Pancreas (tissue), 10 donors: ENCODE measurements at regions of chrX and their contacts with region 1.

Region 1: DNA sequence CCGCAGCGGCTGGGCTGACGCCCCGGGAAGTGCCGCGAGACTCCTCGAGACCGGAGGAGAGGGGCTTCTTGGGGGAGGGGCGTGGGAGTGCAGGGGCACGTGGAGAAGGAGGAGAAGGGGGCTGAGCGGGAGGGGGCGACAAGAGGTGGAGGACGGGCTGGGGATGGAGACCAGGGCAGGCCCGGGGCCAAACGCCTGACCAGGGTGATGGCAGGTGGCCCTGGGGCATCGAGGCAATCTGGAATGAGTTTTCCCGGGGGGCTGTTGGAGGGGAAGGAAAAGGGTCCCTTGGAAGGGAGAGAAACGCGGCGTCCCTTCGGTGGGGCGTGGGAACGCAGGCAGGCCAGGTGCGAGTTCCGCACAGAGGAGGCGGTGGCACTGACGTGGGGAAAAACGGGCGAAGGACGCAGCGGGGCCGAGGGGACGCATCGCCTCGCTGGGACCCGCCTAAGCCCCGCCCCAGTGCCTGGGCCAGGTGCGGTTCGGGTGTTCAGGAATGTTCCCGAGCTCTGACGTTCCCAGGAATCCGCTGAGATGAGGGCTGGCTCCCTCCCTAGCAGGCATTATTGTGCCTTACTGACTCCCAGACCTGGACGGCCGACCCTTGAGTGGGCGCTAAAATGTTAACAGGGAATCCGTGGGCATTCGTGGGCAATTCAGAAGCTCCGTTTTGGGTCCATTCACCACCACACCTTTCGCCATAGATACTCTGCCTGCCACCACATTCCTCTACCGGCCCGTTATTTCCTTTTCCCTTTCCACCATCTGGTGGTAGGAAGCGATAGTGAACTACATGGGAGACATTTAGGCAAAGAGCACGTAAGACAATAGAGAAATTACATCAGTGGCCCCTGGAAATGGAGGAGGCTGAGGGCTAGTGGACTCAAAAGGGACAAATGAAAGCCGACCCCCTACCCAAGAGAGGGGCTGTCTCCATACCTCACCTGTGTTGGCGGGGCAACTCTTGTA is 795 bp upstream of the SH3KBP1 start:
- DNase-seq: peak; percentile 23 to 79 (median 56)
- ATAC-seq: peak; percentile 55 to 87 (median 77)
- H3K4me3 ChIP-seq: peak overlapping the region; percentile 18 to 71 (median 40)
- H3K27ac ChIP-seq: peak overlapping the region in 3 of 4 donors; percentile 19 to 44 (median 34)
- H3K4me1 ChIP-seq: no peaks in the 10 kb centered on the region
- H3K27me3 ChIP-seq: no peaks in the 10 kb centered on the region
- CTCF ChIP-seq: peak in 1 of 4 donors; percentile 27

Region 2: GRCh38 chrX:19593690-19594089 is 294.5 kb before region 1 on chrX:
- intact Hi-C with region 1: loop called in 1 of 3 experiments (anchors 10 kb)
- DNase-seq: no peak
- ATAC-seq: peak in 3 of 4 donors; percentile 33 to 46 (median 34)
- H3K4me3 ChIP-seq: no peak overlapping the region
- H3K27ac ChIP-seq: no peak overlapping the region
- H3K4me1 ChIP-seq: no peaks in the 10 kb centered on the region
- H3K27me3 ChIP-seq: no peaks in the 10 kb centered on the region
- CTCF ChIP-seq: peak in 1 of 4 donors; percentile 15

Region 3: GRCh38 chrX:19739683-19740082 is 148.5 kb before region 1 on chrX:
- intact Hi-C with region 1: loop called in 1 of 3 experiments (anchors 10 kb)
- DNase-seq: peak in 5 of 6 donors; percentile 9 to 67 (median 42)
- ATAC-seq: peak; percentile 61 to 87 (median 84)
- H3K4me3 ChIP-seq: no peak overlapping the region
- H3K27ac ChIP-seq: no peak overlapping the region
- H3K4me1 ChIP-seq: no peaks in the 10 kb centered on the region
- H3K27me3 ChIP-seq: peaks cover 0 to 5% (median 0%) of the 10 kb centered on the region in 4 donors
- CTCF ChIP-seq: peak; percentile 26 to 60 (median 48)